Ovary (tissue), 10 donors: ENCODE measurements at regions of chr15 and their contacts with region 1.

Region 1: DNA sequence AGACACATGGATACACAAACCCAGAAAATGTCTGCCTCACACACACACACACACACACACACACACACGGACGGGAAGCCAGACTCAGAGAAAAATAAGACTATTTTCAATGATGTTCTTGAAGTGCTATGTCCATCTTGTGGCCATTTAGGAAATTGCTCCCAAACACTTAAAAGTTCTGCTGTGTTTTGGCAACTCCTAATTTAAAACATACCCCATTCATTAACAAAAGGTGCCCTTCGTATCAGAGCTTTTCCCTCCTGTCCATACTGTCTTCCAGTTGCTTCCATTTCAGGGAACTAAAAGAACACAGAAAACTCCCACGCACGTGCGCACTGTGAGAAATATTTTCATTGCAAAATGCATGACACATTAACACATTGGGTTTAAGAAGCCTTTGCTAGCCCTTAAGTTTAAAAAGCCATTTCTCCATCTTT is 44.6 kb downstream of the SLC12A1 start:
- DNase-seq: peak; percentile 24 to 44 (median 30)
- H3K4me3 ChIP-seq: no peak overlapping the region
- H3K27ac ChIP-seq: no peak overlapping the region
- H3K4me1 ChIP-seq: no peaks in the 10 kb centered on the region
- H3K27me3 ChIP-seq: no peaks in the 10 kb centered on the region
- CTCF ChIP-seq: peak in 1 of 3 donors; percentile 59
- EP300 ChIP-seq: no peak
- POLR2A ChIP-seq: no peak

Region 2: DNA sequence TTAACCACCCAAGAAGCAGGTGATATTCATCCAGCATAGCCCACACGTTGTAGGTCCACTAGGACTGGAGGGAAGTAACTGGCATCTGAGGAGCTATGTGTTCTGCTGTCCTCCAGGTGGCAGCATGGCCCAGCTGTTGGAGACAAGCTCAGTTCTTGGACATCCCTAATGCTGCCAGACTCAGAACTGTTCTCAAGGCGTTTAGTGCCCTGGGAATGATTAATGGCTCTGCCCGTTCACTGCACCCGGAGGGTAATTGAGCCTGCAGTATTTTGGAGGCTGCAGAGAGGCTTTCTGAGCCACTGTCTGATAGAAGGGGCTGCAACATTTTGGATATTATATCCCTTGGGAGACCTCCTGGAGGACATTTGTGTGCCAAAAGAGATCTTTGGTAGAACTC is 1054.6 kb before region 1 on chr15:
- intact Hi-C with region 1: loop called in 1 of 4 experiments (anchors 10 kb)
- DNase-seq: peak; percentile 77 to 87 (median 81)
- H3K4me3 ChIP-seq: no peak overlapping the region
- H3K27ac ChIP-seq: no peak overlapping the region
- H3K4me1 ChIP-seq: no peaks in the 10 kb centered on the region
- H3K27me3 ChIP-seq: no peaks in the 10 kb centered on the region
- CTCF ChIP-seq: peak; percentile 52 to 85 (median 73)
- EP300 ChIP-seq: no peak
- POLR2A ChIP-seq: no peak

Region 3: GRCh38 chr15:48318131-48318530 is 67.5 kb after region 1 on chr15:
- intact Hi-C with region 1: no loop called
- DNase-seq: no peak
- H3K4me3 ChIP-seq: no peak overlapping the region
- H3K27ac ChIP-seq: no peak overlapping the region
- H3K4me1 ChIP-seq: no peaks in the 10 kb centered on the region
- H3K27me3 ChIP-seq: no peaks in the 10 kb centered on the region
- CTCF ChIP-seq: no peak
- EP300 ChIP-seq: no peak
- POLR2A ChIP-seq: no peak

Region 4: DNA sequence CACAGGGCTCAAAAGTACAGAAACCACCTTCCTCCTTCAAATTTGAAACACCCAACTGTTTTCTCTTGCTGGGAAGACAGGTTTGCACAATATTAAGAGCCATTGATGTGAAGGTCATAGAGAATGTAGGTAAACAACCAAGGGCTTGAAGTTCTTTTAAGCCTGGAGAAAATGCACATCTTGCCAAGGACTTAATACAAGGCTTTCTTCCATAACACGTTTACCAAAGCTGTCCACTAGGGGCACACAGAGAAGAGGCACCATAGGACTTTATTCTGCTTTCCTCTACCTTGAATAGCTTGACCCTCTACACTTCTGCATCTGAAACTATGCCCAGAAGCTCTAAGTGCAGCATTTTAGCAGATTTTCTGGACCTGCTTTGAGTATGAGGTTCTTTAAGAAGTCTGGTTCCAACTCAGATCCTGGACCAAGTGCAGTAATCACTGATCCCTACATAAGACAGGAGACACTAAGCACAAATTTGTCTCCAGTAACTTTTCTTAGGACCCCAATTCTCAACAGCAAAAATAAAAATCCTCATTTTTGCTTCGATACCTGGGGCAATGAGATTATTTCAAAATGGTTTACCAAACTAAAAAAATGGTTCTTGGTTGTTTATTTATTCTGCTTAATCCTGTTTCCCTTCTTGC is 256.9 kb after region 1 on chr15:
- intact Hi-C with region 1: no loop called
- DNase-seq: peak in 2 of 5 donors; percentile 25 to 60
- H3K4me3 ChIP-seq: no peak overlapping the region
- H3K27ac ChIP-seq: peak overlapping the region in 1 of 2 donors; percentile 33
- H3K4me1 ChIP-seq: peaks cover 3% of the 10 kb centered on the region
- H3K27me3 ChIP-seq: no peaks in the 10 kb centered on the region
- CTCF ChIP-seq: peak; percentile 37 to 51 (median 46)
- EP300 ChIP-seq: no peak
- POLR2A ChIP-seq: no peak